PC-3 (cell line): ENCODE measurements at regions of chr2 and their contacts with region 1.

Region 1: DNA sequence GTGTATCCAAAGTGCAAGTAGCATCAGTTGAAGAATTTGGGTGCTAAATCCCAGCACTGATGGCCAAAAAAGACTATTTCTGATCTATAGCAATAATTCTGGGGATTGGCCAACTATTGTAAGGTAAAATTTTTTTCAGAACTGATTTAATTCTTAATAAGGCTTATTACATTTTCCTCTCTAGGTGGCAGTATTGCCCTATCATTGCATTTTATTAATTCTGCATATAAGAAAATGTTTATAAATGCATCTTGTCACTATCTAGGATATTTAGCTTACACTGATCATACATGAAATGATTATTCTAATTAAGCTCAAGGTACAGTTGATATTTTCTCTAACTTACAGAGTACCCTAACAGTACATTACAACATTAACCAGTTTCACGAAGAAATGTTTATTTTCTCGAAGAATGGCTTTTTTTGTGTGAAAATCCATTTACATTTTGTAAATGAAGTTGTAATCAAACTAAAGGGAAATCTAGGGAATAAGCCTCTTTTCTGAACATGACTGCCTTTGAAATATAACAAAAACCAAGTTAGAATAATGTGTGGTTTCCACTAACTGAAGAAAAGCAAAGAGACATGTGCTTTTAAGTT is 11.0 kb downstream of the TTN start:
- DNase-seq: peak; percentile 82
- ATAC-seq: peak; percentile 31; the same call in 1 of the 2 replicates
- H3K4me3 ChIP-seq: no peak overlapping the region
- H3K27ac ChIP-seq: no peak overlapping the region
- H3K4me1 ChIP-seq: no peaks in the 10 kb centered on the region
- H3K27me3 ChIP-seq: no peaks in the 10 kb centered on the region
- CTCF ChIP-seq: peak; percentile 84

Region 2: DNA sequence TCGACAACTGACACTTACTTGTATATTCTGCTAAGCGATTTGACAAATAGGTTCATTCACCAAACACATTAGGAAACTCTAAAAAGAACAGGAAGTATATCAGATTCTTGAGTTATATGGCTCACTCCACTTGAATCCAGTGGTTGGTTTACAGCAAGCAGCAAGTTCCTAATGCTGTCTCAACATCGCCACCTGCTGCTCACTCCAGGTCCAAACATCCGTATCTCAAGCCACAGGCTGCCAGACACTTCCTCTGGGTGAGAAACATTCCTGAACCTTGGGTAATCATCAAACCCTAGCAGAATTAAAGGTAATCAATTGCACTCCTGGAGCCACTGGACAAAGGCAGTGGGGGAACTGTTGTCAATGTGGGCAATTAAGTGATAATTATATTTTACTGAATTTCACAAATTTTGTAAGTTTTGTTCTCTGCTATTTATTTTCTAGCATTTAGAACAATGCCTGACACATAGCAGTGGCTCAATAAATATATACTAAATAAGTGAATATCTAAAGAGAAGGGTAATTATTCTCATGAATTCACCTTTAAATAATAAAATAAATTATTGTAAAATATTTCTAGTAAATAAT is 118.2 kb after region 1 on chr2:
- CTCF ChIA-PET with region 1: interaction called, 3 read pairs
- POLR2A ChIA-PET with region 1: interaction called, 3 read pairs
- intact Hi-C with region 1: loop called (anchors 1 kb)
- DNase-seq: peak; percentile 92
- ATAC-seq: peak; percentile 59
- H3K4me3 ChIP-seq: no peak overlapping the region
- H3K27ac ChIP-seq: no peak overlapping the region
- H3K4me1 ChIP-seq: peaks cover 52% of the 10 kb centered on the region
- H3K27me3 ChIP-seq: no peaks in the 10 kb centered on the region
- CTCF ChIP-seq: peak; percentile 94

Region 3: DNA sequence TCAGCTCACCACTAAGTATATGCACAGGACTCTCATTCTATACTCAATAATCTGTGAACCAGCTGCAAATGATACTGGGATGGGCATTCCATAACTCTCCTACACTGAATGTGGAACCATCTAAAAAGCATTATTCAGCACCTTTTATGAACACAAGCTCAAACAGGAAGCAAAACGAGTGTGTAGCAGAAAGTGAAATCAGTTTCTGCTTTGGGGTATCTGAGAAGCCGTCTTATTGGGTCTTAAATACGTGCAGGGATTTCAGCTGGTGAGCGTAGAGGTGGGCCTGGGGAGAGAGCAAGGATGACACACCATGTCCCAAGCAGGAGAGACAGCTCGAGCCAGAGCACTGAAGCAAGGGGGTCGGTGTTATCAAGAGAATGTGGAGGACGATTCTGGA is 131.0 kb after region 1 on chr2:
- CTCF ChIA-PET with region 1: no interaction called
- POLR2A ChIA-PET with region 1: no interaction called
- intact Hi-C with region 1: no loop called
- DNase-seq: no peak
- ATAC-seq: no peak
- H3K4me3 ChIP-seq: no peak overlapping the region
- H3K27ac ChIP-seq: no peak overlapping the region
- H3K4me1 ChIP-seq: peaks cover 9% of the 10 kb centered on the region; the same call in 1 of the 2 replicates
- H3K27me3 ChIP-seq: no peaks in the 10 kb centered on the region
- CTCF ChIP-seq: no peak

Region 4: GRCh38 chr2:178990533-178991241 is 194.5 kb after region 1 on chr2:
- CTCF ChIA-PET with region 1: no interaction called
- POLR2A ChIA-PET with region 1: no interaction called
- intact Hi-C with region 1: loop called (anchors 10 kb)
- DNase-seq: no peak
- ATAC-seq: no peak
- H3K4me3 ChIP-seq: no peak overlapping the region
- H3K27ac ChIP-seq: no peak overlapping the region
- H3K4me1 ChIP-seq: no peaks in the 10 kb centered on the region
- H3K27me3 ChIP-seq: no peaks in the 10 kb centered on the region
- CTCF ChIP-seq: no peak

Region 5: DNA sequence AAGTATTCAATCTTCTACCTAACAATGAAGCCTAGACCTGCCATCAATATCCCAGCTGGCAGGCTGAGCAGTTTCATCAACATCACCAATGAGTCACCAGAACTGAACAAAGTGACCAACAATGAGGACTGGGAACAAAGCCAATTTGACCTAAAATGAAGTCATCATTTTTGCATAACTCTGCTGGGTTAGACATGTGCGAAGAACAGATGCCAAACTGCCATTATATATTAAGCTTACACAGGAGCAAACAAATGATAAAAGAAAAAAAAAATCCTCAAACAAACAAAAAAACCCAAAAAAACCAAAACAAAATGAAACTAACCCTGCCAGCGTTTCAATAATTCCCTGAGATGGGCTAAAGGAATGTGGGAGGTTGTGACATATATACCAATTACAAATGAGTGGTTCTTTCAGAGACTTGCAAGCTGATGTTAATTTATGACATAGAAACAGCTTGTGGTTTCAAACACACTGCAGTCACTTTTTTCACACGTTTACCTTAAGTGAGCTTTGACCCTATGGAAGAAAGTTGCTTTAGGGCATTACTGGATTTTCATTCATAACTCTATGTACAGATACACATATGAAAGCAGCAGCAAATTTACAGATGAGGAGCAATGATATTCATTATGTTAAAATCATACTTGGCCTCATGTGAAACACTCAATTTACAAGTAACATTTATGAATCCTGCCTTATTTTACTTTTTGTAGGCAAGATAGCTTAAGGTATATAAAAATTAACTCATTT is 310.7 kb after region 1 on chr2:
- CTCF ChIA-PET with region 1: no interaction called
- POLR2A ChIA-PET with region 1: interaction called, 4 read pairs
- intact Hi-C with region 1: loop called (anchors 10 kb)
- DNase-seq: peak; percentile 99
- ATAC-seq: peak; percentile 74
- H3K4me3 ChIP-seq: no peak overlapping the region
- H3K27ac ChIP-seq: peak overlapping the region; percentile 50
- H3K4me1 ChIP-seq: peaks cover 39% of the 10 kb centered on the region
- H3K27me3 ChIP-seq: no peaks in the 10 kb centered on the region
- CTCF ChIP-seq: no peak

Region 6: DNA sequence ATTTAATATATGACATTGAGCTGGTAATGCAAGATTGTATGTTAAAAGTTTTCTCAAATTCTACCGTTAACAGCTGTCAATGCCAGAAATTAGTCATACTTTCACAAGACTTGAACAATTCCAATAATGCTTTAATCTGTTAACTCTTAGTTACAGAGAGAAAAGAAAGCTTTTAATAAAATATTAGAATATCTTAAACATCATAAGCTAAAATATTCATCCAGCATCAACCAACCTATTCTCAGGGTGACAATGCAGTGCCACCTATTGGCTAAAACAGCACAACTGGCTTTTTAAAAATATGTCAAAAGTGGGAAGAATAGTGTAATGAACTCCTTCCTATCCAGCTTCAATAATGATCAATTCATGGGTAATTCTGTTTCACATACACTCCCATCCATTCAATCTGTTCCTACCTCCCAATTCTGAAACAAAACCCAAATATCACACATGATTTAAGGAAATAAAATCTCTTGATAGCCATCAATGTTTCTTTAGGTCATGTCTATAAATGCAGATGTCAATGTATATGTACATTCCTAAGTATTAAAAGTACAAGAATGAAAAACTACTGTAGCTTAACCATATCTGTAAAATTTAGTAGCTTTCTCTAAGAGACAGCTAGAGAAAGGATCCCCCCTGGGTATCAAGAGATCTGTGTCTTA is 333.5 kb after region 1 on chr2:
- CTCF ChIA-PET with region 1: no interaction called
- POLR2A ChIA-PET with region 1: interaction called, 3 read pairs
- intact Hi-C with region 1: loop called (anchors 2 kb)
- DNase-seq: peak; percentile 56
- ATAC-seq: no peak
- H3K4me3 ChIP-seq: no peak overlapping the region
- H3K27ac ChIP-seq: no peak overlapping the region
- H3K4me1 ChIP-seq: no peaks in the 10 kb centered on the region
- H3K27me3 ChIP-seq: no peaks in the 10 kb centered on the region
- CTCF ChIP-seq: peak; percentile 82